Activated CD4-positive, alpha-beta T cell treated with anti-CD3 and anti-CD28 coated beads for 36 hours (primary cell): ENCODE measurements at regions of chr17 and their contacts with region 1.

Region 1: DNA sequence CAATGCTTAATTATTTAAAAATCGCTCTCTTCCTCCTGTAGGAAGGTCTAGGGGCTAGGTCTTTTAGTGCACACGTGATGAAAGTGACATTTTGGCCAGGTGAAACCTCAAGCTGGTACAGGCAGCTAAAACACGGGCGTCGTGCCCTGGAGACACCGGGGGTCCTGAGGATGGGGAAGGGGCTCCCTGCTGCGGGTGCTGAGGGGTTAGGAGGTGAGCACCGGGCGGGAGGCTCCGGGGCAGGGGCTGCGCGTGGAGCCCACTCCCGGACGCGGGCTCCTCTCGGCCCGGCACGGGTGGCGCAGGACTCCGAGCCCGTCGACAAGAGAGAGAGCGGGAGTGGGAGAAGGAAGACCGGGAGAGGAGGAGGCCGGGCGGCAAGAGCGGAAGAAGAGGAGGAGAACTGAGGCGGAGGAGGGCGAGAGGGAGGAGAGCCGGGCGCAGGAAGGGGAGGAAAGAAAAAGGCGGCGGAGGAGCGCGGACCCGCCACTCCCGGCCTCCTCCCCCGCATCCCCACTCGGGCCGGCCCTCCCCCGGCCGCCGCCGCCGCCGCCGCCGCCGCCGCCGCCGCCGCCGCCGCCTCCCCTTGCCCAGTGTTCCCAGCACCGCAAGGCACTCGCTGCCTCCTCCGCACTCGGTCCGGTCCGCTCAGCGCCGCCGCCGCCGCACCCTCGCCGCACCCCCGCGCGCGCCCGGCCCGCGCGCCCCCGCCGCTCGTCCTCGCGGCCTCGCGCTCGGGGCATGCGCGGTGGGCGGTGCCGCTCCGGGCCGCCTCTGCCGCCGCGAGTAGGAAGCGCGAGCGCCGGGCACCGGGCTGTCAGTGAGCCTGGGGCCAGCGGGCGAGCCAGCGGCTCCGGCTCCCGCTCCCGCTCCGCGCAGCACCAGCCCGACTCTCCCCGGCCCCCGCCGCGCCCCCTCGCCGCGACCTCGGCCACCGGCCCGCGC is at the start of gene PRKCA:
- DNase-seq: peak; percentile 85
- ATAC-seq: peak; percentile 59
- H3K4me3 Mint-ChIP-seq: peak within 1 kb of the TSS; percentile 97
- H3K27ac Mint-ChIP-seq: peak within 1 kb of the TSS; percentile 100
- H3K4me1 Mint-ChIP-seq: peaks cover 42% of the 10 kb centered on the region
- H3K27me3 Mint-ChIP-seq: no peaks in the 10 kb centered on the region
- total RNA-seq, gene PRKCA: 73.3 to 77.0 TPM

Region 2: DNA sequence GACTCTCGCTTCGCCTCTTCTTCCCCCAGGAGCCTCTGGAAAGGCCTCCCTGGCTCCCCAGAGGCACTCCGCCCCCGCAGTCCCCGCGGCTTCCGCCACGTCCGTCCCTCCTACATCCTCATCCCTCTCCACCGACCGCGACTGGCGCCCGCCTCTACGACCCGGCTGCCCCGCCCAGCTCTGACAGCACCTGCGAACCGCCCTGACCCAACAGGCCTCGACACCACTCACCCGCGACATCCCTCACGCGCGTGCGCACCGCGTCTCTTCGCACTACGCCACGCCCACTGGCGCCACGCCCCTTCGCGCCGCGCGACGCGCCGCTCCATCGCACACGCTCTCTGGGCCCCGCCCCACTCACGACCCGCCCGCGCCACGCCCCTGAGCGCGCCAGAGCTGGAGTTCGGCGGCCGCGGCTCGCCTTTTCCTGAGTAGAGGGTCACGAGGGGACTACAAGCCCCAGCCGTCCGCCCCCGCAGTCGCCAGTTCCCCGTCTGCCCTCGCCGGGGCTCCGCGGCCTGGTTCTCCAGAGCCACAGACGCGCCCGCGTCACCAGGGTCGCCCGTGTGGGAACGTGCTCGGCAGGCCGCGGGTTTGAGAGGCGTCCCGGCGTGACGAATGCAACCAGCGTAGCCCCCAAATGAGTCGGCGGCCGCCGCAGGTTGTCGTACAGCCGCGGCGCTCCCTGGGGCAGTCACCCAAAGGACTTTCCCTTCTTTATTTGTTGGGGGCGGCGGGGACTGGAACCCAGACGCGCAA is 1326.6 kb before region 1 on chr17:
- CTCF ChIA-PET with region 1: no interaction called
- POLR2A ChIA-PET with region 1: no interaction called
- intact Hi-C with region 1: loop called in 1 of 2 experiments (anchors 10 kb)
- DNase-seq: peak; percentile 97
- ATAC-seq: peak; percentile 80
- H3K4me3 Mint-ChIP-seq: peak overlapping the region; percentile 81
- H3K27ac Mint-ChIP-seq: peak overlapping the region; percentile 98
- H3K4me1 Mint-ChIP-seq: peaks cover 59% of the 10 kb centered on the region
- H3K27me3 Mint-ChIP-seq: no peaks in the 10 kb centered on the region

Region 3: DNA sequence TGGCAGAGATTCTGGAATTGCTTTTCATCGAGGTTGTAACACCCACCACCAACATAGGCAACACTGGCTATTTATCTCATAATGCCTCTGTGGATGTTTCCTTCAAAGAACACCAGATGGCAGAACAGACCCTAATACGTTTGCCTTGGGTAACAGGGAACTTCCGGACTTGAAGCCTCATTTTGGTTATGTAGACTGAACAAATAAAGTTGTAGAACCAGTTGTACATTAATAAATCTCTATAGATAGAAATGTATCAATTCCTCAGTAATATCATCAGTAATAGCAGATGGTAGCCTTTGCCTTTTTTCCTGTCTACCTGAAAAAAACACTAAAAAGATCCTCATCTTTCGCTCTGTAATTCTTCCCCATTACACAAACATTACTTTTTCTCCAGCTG is 47.0 kb before region 1 on chr17:
- CTCF ChIA-PET with region 1: interaction called, 4 read pairs
- POLR2A ChIA-PET with region 1: no interaction called
- intact Hi-C with region 1: loop called (anchors 1 to 2 kb)
- DNase-seq: peak; percentile 35
- ATAC-seq: peak; percentile 93
- H3K4me3 Mint-ChIP-seq: peak overlapping the region; percentile 51
- H3K27ac Mint-ChIP-seq: peak overlapping the region; percentile 86
- H3K4me1 Mint-ChIP-seq: peaks cover 19% of the 10 kb centered on the region
- H3K27me3 Mint-ChIP-seq: no peaks in the 10 kb centered on the region

Region 4: DNA sequence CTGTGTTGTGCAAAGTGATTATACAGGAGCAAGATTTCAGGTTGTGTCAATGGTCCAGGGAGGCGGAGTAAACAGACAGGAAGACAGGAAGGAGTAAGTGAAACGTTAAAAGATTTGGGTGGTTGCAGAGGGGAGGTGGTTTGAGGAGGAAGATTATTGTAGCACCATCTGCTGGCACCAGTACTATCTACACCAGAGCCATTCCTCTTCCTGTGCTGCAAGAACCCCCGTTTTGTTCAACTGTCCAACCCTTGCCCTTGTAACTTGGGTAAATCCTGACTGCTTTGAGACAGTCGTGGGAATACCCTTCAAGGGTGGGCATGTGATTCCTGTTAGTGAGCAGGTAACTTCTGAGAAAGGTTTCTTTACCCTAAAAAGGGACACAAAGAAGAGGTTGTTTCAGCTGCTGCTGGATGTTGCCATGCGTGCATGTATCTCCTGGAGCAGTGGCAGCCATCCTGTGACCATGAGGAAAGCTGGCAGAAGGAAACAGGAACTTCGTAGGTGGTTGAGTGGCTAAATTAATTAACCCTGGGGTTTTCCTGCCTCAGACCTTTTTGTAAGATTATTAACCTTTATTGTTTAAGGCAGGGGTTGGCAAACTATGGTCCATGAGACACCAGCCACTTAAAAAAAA is 124.4 kb after region 1 on chr17:
- CTCF ChIA-PET with region 1: interaction called, 3 read pairs
- POLR2A ChIA-PET with region 1: no interaction called
- intact Hi-C with region 1: loop called (anchors 2 to 5 kb)
- DNase-seq: peak; percentile 60
- ATAC-seq: peak; percentile 94
- H3K4me3 Mint-ChIP-seq: peak overlapping the region; percentile 4
- H3K27ac Mint-ChIP-seq: peak overlapping the region; percentile 88
- H3K4me1 Mint-ChIP-seq: peaks cover 77% of the 10 kb centered on the region
- H3K27me3 Mint-ChIP-seq: no peaks in the 10 kb centered on the region

Region 5: DNA sequence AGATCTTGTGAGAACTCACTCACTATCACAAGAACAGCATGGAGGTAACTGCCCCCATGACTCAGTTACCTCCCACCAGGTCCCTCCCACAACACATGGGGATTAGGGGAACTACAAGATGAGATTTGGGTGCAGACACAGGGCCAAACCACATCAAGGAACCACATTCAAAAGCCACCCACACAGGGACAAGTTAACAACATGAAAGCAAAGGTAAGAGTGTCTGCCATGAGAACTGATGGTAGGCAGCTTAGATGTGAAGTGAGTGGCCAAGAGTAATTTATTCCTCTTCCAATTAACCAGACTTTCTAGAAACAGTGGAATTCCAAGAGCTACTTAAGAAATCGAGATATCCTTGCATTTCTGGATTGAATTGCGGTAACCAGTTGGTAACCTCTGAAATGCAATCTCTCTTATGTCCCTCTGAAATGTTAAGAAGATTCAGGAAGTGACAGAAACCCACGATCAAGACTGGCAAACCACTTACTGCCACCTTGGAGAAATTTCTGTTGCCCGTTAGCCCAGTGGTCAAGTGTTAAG is 365.5 kb after region 1 on chr17:
- CTCF ChIA-PET with region 1: no interaction called
- POLR2A ChIA-PET with region 1: no interaction called
- intact Hi-C with region 1: loop called (anchors 5 kb)
- DNase-seq: peak; percentile 84
- ATAC-seq: peak; percentile 81
- H3K4me3 Mint-ChIP-seq: peak overlapping the region; percentile 1
- H3K27ac Mint-ChIP-seq: peak overlapping the region; percentile 76
- H3K4me1 Mint-ChIP-seq: peaks cover 81% of the 10 kb centered on the region
- H3K27me3 Mint-ChIP-seq: no peaks in the 10 kb centered on the region

Region 6: GRCh38 chr17:67366193-67367157 is 1064.4 kb after region 1 on chr17 and contains the start of gene PSMD12:
- CTCF ChIA-PET with region 1: no interaction called
- POLR2A ChIA-PET with region 1: no interaction called
- intact Hi-C with region 1: loop called in 1 of 2 experiments (anchors 10 kb)
- DNase-seq: peak; percentile 96
- ATAC-seq: peak; percentile 78
- H3K4me3 Mint-ChIP-seq: peak within 1 kb of the TSS; percentile 94
- H3K27ac Mint-ChIP-seq: peak within 1 kb of the TSS; percentile 96
- H3K4me1 Mint-ChIP-seq: peaks cover 43% of the 10 kb centered on the region
- H3K27me3 Mint-ChIP-seq: no peaks in the 10 kb centered on the region
- total RNA-seq, gene PSMD12: 100 to 101 TPM